ENCODE measurements at regions of chrX and their contacts with region 1.

Region 1: DNA sequence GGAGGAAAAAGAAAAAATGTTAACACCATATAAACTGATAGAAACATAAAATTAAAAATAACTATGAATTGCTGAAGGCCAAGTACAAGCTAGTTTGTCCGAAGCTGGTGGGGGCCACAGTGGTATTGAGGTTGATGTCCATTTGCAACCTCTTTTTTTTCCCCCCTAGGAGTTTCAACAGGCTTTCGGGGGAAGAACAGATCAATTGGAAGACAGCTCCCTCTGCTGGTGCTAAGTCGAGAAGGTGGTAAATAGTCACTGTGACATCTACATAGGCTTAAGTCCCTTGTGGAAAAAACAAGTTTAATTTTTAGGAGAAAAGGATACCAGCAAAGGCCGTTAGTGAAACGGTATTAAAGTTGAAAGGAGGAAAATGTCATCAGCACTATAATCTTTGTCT is 115.7 kb upstream of the ZXDA start:
- DNase-seq: peak in 1 of 2 experiments; percentile 14
- H3K4me3 ChIP-seq: no peak overlapping the region
- H3K4me3 Mint-ChIP-seq: no peak overlapping the region
- H3K27ac Mint-ChIP-seq: no peak overlapping the region
- H3K4me1 ChIP-seq: no peaks in the 10 kb centered on the region
- H3K4me1 Mint-ChIP-seq: no peaks in the 10 kb centered on the region
- H3K27me3 ChIP-seq: no peaks in the 10 kb centered on the region
- H3K27me3 Mint-ChIP-seq: no peaks in the 10 kb centered on the region
- CTCF ChIP-seq: peak; percentile 39 to 48

Region 2: DNA sequence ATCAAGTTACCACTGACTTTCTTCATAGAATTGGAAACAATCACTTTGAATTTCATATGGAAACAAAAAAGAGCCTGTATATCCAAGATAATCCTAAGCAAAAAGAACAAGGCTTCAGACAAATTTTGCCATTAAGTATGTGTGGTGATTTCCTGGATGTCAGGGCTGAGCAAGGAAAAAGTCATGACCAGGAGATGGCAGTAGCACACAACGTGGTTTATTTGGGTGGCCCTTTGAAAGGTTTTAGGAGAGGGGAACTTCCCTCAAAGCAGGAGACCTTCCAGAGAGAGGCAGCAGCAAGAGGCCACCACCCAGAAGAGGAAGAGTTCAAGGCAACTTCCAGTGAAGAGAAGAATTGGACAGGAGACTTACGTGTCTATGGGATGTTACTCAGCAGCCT is 452.2 kb before region 1 on chrX:
- CTCF ChIA-PET with region 1: no interaction called
- POLR2A ChIA-PET with region 1: no interaction called
- intact Hi-C with region 1: loop called (anchors 5 kb)
- DNase-seq: peak in 1 of 2 experiments; percentile 13
- H3K4me3 ChIP-seq: no peak overlapping the region
- H3K4me3 Mint-ChIP-seq: no peak overlapping the region
- H3K27ac Mint-ChIP-seq: no peak overlapping the region
- H3K4me1 ChIP-seq: no peaks in the 10 kb centered on the region
- H3K4me1 Mint-ChIP-seq: no peaks in the 10 kb centered on the region
- H3K27me3 ChIP-seq: no peaks in the 10 kb centered on the region
- H3K27me3 Mint-ChIP-seq: peaks cover 5% of the 10 kb centered on the region
- CTCF ChIP-seq: peak; percentile 22 to 44

Region 3: GRCh38 chrX:57640674-57641016 is 385.3 kb before region 1 on chrX:
- CTCF ChIA-PET with region 1: no interaction called
- POLR2A ChIA-PET with region 1: no interaction called
- intact Hi-C with region 1: no loop called
- DNase-seq: no peak
- H3K4me3 ChIP-seq: no peak overlapping the region
- H3K4me3 Mint-ChIP-seq: no peak overlapping the region
- H3K27ac Mint-ChIP-seq: peak overlapping the region; percentile 64
- H3K4me1 ChIP-seq: no peaks in the 10 kb centered on the region
- H3K4me1 Mint-ChIP-seq: peaks cover 6% of the 10 kb centered on the region
- H3K27me3 ChIP-seq: no peaks in the 10 kb centered on the region
- H3K27me3 Mint-ChIP-seq: no peaks in the 10 kb centered on the region
- CTCF ChIP-seq: no peak

Region 4: DNA sequence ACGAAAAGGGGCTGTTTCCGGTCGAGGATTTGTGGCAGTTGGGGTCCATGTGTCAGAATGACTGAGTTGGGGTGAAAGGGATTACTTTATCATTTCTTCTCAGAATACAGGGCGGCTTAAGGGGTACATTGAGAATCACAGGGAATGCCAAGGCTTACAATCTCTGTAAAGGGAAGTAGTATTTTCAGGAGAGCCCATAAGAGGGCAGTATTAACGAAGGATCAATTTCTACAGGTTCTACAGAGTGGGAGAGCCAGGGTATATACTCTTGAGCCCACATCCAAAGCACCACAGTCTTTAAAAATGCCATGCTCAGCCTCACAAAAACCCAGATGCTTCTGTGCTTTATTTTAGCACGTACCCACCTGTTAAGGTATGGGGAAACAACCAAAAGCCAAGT is 48.0 kb before region 1 on chrX:
- CTCF ChIA-PET with region 1: no interaction called
- POLR2A ChIA-PET with region 1: no interaction called
- intact Hi-C with region 1: loop called (anchors 2 kb)
- DNase-seq: peak in 1 of 2 experiments; percentile 1
- H3K4me3 ChIP-seq: no peak overlapping the region
- H3K4me3 Mint-ChIP-seq: no peak overlapping the region
- H3K27ac Mint-ChIP-seq: no peak overlapping the region
- H3K4me1 ChIP-seq: no peaks in the 10 kb centered on the region
- H3K4me1 Mint-ChIP-seq: no peaks in the 10 kb centered on the region
- H3K27me3 ChIP-seq: no peaks in the 10 kb centered on the region
- H3K27me3 Mint-ChIP-seq: peaks cover 2% of the 10 kb centered on the region
- CTCF ChIP-seq: no peak

Measured in Caco-2 (cell line).